HAP-1 (cell line): ENCODE measurements at regions of chr22 and their contacts with region 1.

Region 1: GRCh38 chr22:19970479-19971275 is 29.1 kb upstream of the TXNRD2 start:
- DNase-seq: peak; percentile 17 to 78
- H3K4me3 ChIP-seq: no peak overlapping the region
- H3K4me1 ChIP-seq: no peaks in the 10 kb centered on the region
- H3K27me3 ChIP-seq: no peaks in the 10 kb centered on the region

Region 2: DNA sequence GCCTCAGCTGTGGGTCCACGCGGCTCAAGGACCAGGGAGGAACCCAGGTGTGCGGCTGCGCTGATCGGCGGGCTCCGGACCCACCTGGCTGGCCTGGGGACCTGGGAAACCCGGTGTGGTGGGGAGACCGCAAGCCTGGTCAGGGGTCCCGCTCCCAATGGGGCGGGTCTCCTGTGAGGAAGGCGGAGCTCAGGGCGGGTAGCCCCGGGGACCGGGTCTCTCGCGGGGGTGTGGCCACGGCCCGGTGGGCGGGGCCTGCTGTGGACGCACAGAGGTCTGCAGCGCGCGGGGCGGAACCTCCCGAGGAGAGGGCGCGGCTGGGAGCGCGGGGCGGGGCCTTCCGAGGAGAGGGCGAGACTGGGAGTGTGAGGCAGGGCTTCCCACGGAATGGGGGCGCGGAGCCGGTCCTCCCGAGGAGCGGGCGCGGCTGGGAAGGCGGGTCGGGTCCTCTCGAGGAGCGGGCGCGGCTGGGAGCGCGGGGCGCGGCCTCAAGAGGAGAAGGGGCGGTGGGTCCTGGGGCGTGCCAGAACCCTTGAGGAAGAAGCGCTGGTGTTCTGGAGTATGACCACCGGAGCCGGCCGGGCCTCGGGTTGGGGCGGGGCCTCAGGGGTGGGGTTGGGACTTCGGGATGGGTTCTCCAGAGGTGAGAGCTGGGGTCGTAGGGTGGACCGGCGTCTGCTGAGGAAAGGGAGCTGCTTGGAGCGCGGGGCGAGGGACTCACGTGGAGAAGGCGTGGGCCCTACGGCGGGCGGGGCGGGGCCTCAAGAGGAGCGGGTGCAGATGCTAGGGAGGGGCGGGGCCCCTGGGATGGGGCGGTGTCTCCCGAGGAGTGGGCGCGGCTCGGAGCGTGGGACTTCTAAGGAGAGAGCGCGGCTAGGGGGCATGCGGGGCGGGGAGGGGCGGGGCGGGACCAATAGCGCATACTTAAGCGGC is 328.4 kb after region 1 on chr22:
- in situ Hi-C with region 1: loop called (anchors 25 kb)
- DNase-seq: peak; percentile 83 to 96
- H3K4me3 ChIP-seq: peak overlapping the region; percentile 35
- H3K4me1 ChIP-seq: no peaks in the 10 kb centered on the region
- H3K27me3 ChIP-seq: 0 out of 2 replicates have a peak, but pooled peaks cover 3% of the 10 kb centered on the region